Activated CD8-positive, alpha-beta T cell treated with anti-CD3 and anti-CD28 coated beads, Interleukin-2, amount 10 ng/mL, durations not matched to agents 7 days and 5 days (primary cell): ENCODE measurements at regions of chr6 and their contacts with region 1.

Region 1: DNA sequence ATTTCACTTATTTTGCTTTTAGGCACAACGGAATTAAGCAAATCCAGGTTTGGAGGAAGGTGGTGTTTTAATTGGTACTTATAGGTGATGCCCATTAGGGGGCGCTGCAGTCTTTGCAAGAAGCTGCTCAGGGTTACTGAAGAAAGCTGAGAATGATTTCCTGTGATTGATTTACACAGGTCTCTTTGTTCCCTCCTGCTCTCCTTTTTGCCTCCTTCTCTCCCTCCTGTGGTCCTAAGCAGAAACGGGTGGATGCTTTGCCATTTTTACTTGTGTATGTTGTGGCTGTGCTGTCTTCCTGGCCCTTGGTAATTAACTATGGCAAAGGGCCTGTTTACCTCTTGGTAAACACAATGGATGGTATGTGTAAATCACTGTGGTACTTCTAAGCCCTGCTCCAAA is 97.8 kb downstream of the ANKS1A start:
- DNase-seq: peak; percentile 77
- ATAC-seq: peak; percentile 55
- H3K4me3 Mint-ChIP-seq: no peak overlapping the region
- H3K27ac Mint-ChIP-seq: no peak overlapping the region
- H3K4me1 Mint-ChIP-seq: no peaks in the 10 kb centered on the region
- H3K27me3 Mint-ChIP-seq: no peaks in the 10 kb centered on the region

Region 2: DNA sequence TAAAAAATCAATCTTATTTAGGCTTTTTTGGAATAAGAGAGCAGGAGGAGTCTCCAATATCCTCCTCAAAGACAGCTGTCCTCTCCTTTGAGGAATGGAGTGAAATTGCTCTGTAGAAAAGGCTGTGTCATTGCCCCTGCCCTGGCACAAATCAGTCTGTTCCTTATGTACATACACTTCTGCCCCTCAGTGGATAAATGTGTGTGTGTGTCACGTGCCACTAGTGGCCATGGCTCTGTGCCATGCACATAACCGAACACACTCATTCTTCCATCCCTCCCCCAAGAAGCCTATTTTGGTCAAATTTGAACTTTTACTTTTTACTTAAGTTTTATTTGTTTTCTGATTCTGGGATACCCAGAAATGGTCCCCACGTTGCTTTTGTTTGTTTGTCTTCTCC is 48.6 kb before region 1 on chr6:
- CTCF ChIA-PET with region 1: no interaction called
- POLR2A ChIA-PET with region 1: no interaction called
- DNase-seq: no peak
- ATAC-seq: no peak
- H3K4me3 Mint-ChIP-seq: no peak overlapping the region
- H3K27ac Mint-ChIP-seq: no peak overlapping the region
- H3K4me1 Mint-ChIP-seq: peaks cover 8% of the 10 kb centered on the region
- H3K27me3 Mint-ChIP-seq: peaks cover 2% of the 10 kb centered on the region

Region 3: DNA sequence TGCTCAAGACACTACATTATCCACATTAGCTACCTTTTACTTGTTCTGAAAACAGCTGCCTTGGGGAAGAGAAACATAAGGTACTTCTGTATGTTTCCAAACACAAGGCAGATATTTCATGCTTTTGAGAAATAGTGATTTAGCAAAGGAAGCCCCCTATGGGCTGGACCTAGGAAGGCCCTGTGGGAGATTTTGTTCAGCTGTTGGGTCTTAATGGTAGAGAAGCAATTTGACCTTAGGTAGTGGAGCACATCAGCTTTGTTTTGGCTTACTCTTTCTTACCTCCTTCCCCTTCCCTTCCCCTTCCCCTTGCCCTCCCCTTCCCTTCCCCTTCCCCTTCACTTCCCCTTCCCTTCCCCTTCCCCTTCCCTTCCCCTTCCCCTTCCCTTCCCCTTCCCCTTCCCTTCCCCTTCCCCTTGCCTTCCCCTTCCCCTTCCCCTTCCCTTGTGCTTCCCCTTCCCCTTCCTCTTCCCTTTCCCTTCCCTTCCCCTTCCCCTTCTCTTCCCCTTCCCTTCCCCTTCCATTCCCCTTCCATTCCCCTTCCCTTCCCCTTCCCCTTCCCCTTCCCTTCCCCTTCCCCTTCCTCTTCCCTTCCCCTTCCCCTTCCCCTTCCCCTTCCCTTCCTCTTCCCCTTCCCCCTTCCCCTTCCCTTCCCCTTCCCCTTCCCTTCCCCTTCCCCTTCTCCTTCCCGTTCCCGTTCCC is 13.1 kb before region 1 on chr6:
- CTCF ChIA-PET with region 1: interaction called, 13 read pairs
- POLR2A ChIA-PET with region 1: no interaction called
- DNase-seq: no peak
- ATAC-seq: no peak
- H3K4me3 Mint-ChIP-seq: no peak overlapping the region
- H3K27ac Mint-ChIP-seq: no peak overlapping the region
- H3K4me1 Mint-ChIP-seq: peaks cover 9% of the 10 kb centered on the region
- H3K27me3 Mint-ChIP-seq: peaks cover 2% of the 10 kb centered on the region